ENCODE measurements at regions of chr3 and their contacts with region 1.

Region 1: GRCh38 chr3:128680602-128681368 is 30.2 kb upstream of the RPN1 start:
- DNase-seq: peak; percentile 97
- H3K4me3 Mint-ChIP-seq: peak overlapping the region; percentile 86
- H3K27ac Mint-ChIP-seq: peak overlapping the region; percentile 86
- H3K4me1 Mint-ChIP-seq: peaks cover 38% of the 10 kb centered on the region
- H3K27me3 Mint-ChIP-seq: peaks cover 6% of the 10 kb centered on the region

Region 2: DNA sequence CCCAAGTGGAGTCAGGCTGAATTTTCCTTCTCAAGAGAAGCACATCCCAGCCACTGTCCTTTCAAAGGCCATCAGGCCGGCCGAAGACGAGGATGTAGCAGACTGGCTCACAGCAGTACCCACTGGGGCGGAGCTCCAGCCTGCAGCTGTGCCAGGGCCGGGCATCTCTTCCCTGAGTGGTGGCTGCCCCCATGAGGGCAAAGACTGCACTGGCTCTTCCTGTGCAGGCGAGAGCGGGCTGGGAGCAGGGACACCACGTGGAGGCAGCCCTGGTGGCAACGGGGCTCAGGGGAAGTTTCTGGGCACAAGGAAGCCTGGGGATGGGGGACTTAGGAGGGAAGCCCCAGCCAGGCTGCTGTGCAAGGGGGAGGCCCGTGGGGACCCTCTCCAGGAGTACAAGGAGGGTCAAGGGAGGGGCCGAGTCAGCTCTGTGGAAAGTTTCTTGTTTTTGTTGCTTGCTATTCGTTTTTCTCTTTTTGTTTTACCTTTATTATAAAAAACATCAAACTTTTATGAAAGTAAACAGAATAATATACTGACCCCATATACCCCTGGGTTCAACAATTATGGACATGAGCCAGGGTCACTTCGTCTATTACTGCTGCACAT is 96.3 kb before region 1 on chr3:
- CTCF ChIA-PET with region 1: no interaction called
- POLR2A ChIA-PET with region 1: no interaction called
- DNase-seq: peak; percentile 50
- H3K4me3 Mint-ChIP-seq: no peak overlapping the region
- H3K27ac Mint-ChIP-seq: no peak overlapping the region
- H3K4me1 Mint-ChIP-seq: peaks cover 6% of the 10 kb centered on the region
- H3K27me3 Mint-ChIP-seq: peaks cover 15% of the 10 kb centered on the region

Region 3: GRCh38 chr3:128650096-128651050 is 30.4 kb before region 1 on chr3 and contains the start of gene RPN1:
- CTCF ChIA-PET with region 1: interaction called, 21 read pairs
- POLR2A ChIA-PET with region 1: interaction called, 26 read pairs
- DNase-seq: peak; percentile 96
- H3K4me3 Mint-ChIP-seq: peak within 1 kb of the TSS; percentile 85
- H3K27ac Mint-ChIP-seq: peak within 1 kb of the TSS; percentile 88
- H3K4me1 Mint-ChIP-seq: peaks cover 47% of the 10 kb centered on the region
- H3K27me3 Mint-ChIP-seq: no peaks in the 10 kb centered on the region
- total RNA-seq, gene RPN1: 190 to 192 TPM

Region 4: DNA sequence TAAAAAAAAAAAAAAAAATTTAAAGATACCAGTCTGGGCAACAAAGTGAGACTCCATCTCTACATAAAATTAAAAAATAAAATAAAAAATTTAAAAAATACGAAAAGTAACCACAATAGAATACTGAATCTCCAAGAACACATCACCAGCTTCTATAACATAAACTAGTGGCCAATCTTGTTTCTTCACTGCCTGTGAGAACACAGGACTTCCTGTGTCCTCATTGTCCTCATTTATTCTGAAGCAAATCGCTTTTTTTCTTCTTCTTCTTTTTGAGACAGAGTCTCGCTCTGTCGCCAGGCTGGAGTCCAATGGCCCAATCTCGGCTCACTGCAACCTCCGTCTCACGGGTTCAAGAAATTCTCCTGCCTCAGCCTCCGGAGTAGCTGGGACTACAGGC is 16.6 kb after region 1 on chr3:
- CTCF ChIA-PET with region 1: interaction called, 27 read pairs
- POLR2A ChIA-PET with region 1: interaction called, 14 read pairs
- DNase-seq: no peak
- H3K4me3 Mint-ChIP-seq: no peak overlapping the region
- H3K27ac Mint-ChIP-seq: no peak overlapping the region
- H3K4me1 Mint-ChIP-seq: peaks cover 7% of the 10 kb centered on the region
- H3K27me3 Mint-ChIP-seq: peaks cover 11% of the 10 kb centered on the region

Region 5: DNA sequence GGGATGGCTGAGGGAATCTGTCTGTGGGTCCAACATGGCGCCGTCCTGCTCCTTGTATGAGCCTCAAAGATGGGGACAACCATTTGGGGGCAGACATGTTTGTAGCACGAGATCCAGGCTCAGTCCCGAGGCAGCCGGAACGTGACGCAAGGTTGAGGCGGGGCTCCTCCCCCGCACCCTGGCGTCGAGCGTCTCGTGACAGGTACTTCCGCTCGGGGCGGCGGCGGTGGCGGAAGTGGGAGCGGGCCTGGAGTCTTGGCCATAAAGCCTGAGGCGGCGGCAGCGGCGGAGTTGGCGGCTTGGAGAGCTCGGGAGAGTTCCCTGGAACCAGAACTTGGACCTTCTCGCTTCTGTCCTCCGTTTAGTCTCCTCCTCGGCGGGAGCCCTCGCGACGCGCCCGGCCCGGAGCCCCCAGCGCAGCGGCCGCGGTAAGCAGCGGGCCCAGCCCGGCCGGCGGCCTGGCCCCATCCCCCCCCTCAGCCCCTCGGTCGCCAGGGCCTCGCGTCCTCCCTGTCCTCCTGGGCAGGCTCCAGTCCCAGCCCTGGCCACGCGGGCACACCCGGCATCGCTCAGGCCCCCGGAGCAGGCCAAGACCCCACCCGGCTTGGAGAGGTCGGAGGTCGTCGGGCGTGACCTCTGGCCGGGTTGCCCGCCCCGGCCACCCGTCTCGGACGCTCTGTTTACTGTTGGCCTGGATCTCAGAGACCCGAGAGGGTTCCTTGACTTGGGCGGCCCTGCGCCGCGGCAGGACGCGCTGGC is 45.3 kb after region 1 on chr3 and contains the start of gene RAB7A:
- CTCF ChIA-PET with region 1: interaction called, 17 read pairs
- POLR2A ChIA-PET with region 1: interaction called, 42 read pairs
- DNase-seq: peak; percentile 98
- H3K4me3 Mint-ChIP-seq: peak within 1 kb of the TSS; percentile 85
- H3K27ac Mint-ChIP-seq: peak within 1 kb of the TSS; percentile 89
- H3K4me1 Mint-ChIP-seq: peaks cover 50% of the 10 kb centered on the region
- H3K27me3 Mint-ChIP-seq: peaks cover 5% of the 10 kb centered on the region
- total RNA-seq, gene RAB7A: 213 to 225 TPM

Region 6: DNA sequence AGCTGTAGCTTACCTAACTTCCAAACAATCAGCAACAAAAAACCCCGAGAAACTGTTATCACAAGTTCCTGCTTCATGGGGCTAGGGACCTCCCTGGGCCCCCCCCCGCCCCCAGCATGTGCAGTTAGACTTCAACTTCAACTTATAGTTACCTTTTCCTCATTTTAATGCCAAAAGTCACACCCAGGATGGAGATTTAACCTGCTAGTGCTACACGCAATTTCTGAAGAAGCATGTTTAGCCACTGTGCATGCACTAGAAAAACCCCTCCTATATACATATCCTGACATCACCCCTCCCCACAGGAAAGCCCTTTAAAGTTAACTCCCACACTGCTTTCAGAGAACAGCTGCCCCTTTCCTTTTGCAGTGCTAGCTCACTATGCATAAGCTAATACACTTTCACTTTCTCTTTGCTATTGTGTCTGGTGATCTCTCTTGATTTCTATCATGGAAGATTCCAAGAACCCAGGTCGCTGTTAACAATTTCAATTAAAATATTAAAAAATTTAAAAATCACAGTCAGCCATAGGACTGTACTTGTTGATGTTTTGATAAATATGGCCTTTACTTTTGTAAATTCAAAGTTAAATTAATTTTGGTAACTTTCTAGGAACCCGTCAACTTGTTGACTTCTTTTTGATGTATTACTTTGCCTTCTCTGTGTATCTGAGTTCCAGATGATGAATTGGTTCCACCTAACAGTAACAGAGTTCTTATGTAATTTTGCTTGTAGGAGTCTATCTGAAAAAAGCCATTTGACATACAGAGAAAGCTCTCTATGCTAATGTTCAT is 123.4 kb after region 1 on chr3:
- CTCF ChIA-PET with region 1: interaction called, 187 read pairs
- POLR2A ChIA-PET with region 1: interaction called, 59 read pairs
- DNase-seq: peak; percentile 70
- H3K4me3 Mint-ChIP-seq: peak overlapping the region; percentile 70
- H3K27ac Mint-ChIP-seq: peak overlapping the region; percentile 93
- H3K4me1 Mint-ChIP-seq: peaks cover 69% of the 10 kb centered on the region
- H3K27me3 Mint-ChIP-seq: no peaks in the 10 kb centered on the region